CD4-positive, alpha-beta memory T cell (primary cell): ENCODE measurements at regions of chr1 and their contacts with region 1.

Region 1: DNA sequence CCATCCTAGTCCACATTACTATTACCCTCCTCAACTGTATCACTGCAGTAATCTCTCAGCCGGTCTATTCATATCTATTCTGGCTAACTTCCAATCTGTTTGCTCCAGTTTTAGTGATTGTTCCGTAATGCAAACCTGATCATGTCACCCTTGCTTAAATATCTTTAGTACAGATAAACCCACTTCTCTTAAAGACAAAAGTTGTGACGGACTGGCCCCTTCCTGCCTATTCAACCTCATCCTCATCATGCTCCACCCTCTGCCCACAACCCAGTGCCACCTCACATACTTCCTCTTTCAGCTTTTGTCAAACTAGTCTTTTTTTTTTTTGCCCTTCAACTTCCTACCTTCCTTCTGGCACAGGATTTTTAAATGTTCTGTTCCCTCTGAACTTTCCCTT is 2.8 kb upstream of the C1orf162 start:
- DNase-seq: peak; percentile 84 to 95 (median 91)
- H3K4me3 ChIP-seq: peak overlapping the region; percentile 9 to 39
- H3K4me3 Mint-ChIP-seq: no peak overlapping the region
- H3K27ac ChIP-seq: peak overlapping the region; percentile 68
- H3K27ac Mint-ChIP-seq: no peak overlapping the region
- H3K4me1 ChIP-seq: peaks cover 80% of the 10 kb centered on the region
- H3K4me1 Mint-ChIP-seq: peaks cover 18 to 29% (median 25%) of the 10 kb centered on the region in 4 donors
- H3K27me3 ChIP-seq: no peaks in the 10 kb centered on the region
- H3K27me3 Mint-ChIP-seq: no peaks in the 10 kb centered on the region

Region 2: GRCh38 chr1:111302374-111302773 is 168.6 kb before region 1 on chr1:
- CTCF ChIA-PET with region 1: no interaction called
- POLR2A ChIA-PET with region 1: no interaction called
- intact Hi-C with region 1: no loop called
- DNase-seq: no peak
- H3K4me3 ChIP-seq: no peak overlapping the region
- H3K4me3 Mint-ChIP-seq: no peak overlapping the region
- H3K27ac ChIP-seq: no peak overlapping the region
- H3K27ac Mint-ChIP-seq: no peak overlapping the region
- H3K4me1 ChIP-seq: no peaks in the 10 kb centered on the region
- H3K4me1 Mint-ChIP-seq: no peaks in the 10 kb centered on the region
- H3K27me3 ChIP-seq: no peaks in the 10 kb centered on the region
- H3K27me3 Mint-ChIP-seq: no peaks in the 10 kb centered on the region

Region 3: DNA sequence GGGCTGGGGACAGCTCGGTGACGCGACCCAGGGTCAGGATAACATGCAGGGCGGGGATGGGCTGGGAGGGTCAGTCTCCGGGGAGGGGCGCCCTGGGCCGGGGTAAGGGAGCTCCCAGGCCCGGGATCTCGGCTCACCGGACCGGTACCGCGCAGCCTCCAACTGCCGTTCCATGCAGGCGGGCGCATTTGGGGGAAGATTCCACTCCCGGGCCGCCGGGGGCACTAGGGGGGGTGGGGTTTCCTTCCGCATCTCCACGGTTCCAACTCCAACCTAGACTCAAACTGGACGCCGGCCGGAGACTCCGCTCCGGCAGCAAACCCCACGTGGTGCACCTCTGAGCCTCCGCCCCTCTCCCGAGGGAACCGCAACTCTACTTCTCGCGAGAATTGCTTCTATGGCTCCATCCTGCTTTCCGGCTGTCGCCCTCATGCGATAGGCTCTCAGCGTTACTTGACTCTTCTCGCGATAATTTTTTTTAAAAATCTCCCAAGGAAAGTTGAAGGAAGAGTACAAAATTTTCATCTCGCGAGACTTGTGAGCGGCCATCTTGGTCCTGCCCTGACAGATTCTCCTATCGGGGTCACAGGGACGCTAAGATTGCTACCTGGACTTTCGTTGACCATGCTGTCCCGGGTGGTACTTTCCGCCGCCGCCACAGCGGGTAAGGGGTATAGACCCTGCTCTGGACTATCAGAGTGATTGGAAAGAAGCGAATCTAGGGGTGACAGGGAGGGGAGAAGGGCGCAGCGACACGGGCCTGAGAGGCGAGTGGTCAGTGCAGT is 21.9 kb before region 1 on chr1 and contains the starts of genes ATP5PB and WDR77:
- CTCF ChIA-PET with region 1: interaction called, 17 read pairs
- POLR2A ChIA-PET with region 1: interaction called, 164 read pairs
- intact Hi-C with region 1: loop called (anchors 1 kb)
- DNase-seq: peak; percentile 94 to 97 (median 96)
- H3K4me3 ChIP-seq: peak within 1 kb of the TSS; percentile 78 to 96
- H3K4me3 Mint-ChIP-seq: peak within 1 kb of the TSS; percentile 98 to 100 (median 99)
- H3K27ac ChIP-seq: peak within 1 kb of the TSS; percentile 91
- H3K27ac Mint-ChIP-seq: peak within 1 kb of the TSS; percentile 94 to 100 (median 99)
- H3K4me1 ChIP-seq: peaks cover 77% of the 10 kb centered on the region
- H3K4me1 Mint-ChIP-seq: peaks cover 57 to 87% (median 71%) of the 10 kb centered on the region in 4 donors
- H3K27me3 ChIP-seq: no peaks in the 10 kb centered on the region
- H3K27me3 Mint-ChIP-seq: no peaks in the 10 kb centered on the region
- total RNA-seq, gene ATP5PB: 103 to 112 TPM
- total RNA-seq, gene WDR77: 26.3 to 30.3 TPM